ENCODE measurements at regions of chr15 and their contacts with region 1.

Region 1: DNA sequence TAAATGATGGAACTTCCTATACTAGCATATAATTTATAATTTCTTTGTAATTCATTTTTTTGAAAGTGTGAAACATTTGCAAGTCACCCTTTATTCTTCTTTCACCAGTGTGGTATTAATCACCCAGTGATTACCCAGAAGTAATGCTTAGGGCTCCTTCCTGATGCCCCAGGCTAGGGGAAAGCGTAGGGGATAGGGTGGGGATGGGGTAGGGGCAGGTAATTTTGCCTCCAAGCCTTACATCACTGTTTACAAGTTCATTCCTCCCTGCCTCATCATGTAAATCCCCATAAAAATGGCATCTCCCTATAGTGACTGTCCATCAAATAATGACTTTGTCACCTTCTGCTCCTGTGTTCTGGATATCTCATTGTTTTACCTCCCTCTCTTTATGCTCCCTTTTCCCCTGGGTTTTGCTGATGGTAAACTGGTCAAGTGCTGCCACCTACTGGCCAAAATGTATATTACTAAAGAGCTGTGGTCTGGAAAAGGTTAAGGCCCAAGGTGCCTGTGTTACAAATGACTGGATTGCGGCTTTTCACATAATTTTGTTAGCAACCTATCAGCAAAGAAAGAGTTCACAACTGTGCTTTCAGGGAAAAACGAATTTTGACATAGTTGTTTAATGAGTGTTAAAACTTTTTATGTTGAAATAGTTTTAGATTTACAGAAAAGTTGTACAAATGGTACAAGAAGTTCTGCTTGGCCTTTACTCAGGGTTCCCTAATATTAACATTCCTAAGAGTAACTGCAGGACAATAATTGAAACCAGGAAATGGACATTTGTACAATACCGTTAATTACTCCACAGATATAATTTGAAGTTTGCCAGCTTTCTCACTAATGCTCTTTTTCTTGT is 54.7 kb downstream of the ONECUT1 start:
- DNase-seq: peak; percentile 81
- H3K27ac ChIP-seq: no peak overlapping the region
- CTCF ChIP-seq: peak; percentile 82

Region 2: GRCh38 chr15:52256366-52256765 is 479.1 kb before region 1 on chr15:
- CTCF ChIA-PET with region 1: interaction called, 10 read pairs
- POLR2A ChIA-PET with region 1: no interaction called
- DNase-seq: peak; percentile 75
- H3K27ac ChIP-seq: no peak overlapping the region
- CTCF ChIP-seq: peak; percentile 90

Region 3: DNA sequence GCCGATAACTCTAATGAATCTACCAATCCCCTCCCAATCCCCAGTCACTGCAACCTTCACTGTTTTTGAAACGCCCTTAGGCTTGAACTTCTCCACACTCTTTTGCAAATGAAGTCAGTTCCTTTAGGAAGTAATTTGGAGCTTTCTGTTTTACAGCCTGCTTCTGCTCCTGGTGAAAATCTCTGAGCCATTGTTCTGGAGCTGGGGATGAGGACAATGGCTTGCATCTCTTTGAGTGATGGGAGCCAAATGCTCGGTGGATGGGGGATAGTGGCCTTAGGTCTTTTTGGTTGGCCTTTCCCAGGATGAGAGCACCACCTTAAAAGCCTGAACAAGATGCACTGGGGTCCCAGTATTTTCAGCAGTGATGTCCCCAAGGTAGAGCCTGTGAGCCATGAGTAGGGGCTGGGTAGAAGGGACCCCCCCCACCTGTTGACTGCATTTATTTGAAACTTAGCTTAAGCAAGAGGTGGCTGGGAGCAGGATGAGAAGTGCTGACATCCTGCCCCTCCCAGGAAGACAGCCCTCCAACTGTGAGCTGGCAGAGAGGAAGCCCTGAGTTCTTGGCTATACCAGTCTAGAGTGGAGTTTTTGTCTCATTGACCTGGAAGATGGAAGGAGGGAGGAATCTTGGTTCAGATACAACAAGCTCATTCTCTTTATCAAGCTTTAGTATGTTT is 432.2 kb before region 1 on chr15:
- CTCF ChIA-PET with region 1: no interaction called
- POLR2A ChIA-PET with region 1: no interaction called
- DNase-seq: no peak
- H3K27ac ChIP-seq: no peak overlapping the region
- CTCF ChIP-seq: no peak

Region 4: DNA sequence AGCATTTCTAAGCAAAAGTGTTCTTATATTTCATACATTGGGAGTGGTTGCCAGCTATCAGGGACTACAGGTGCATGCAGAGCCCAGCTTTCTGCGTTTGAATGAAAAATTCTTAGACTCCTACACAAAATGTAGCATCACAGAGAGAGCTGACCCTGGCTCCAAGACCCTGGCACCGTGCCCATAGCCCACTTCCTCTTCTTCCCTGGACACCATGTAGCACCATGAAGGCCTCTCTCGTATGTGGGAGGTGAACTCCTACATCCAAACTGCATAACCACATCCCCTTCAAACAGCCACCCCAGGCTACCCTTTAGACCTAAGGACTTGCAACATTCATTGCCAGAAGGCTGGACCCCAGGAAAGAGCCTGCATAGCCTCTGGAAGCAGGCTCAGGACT is 20.5 kb before region 1 on chr15:
- CTCF ChIA-PET with region 1: no interaction called
- POLR2A ChIA-PET with region 1: no interaction called
- DNase-seq: no peak
- H3K27ac ChIP-seq: no peak overlapping the region
- CTCF ChIP-seq: no peak

Region 5: GRCh38 chr15:52812815-52813214 is 77.4 kb after region 1 on chr15:
- CTCF ChIA-PET with region 1: no interaction called
- POLR2A ChIA-PET with region 1: no interaction called
- DNase-seq: no peak
- H3K27ac ChIP-seq: no peak overlapping the region
- CTCF ChIP-seq: no peak

Measured in RWPE1 (cell line).